ENCODE measurements at regions of chr16 and their contacts with region 1.

Region 1: GRCh38 chr16:79509211-79509631 is 91.3 kb downstream of the MAF start:
- H3K4me3 Mint-ChIP-seq: no peak overlapping the region
- H3K27ac Mint-ChIP-seq: peak overlapping the region; percentile 89
- H3K4me1 Mint-ChIP-seq: peaks cover 40% of the 10 kb centered on the region
- H3K27me3 Mint-ChIP-seq: peaks cover 19% of the 10 kb centered on the region

Region 2: GRCh38 chr16:79451196-79451816 is 57.9 kb before region 1 on chr16:
- intact Hi-C with region 1: loop called (anchors 10 kb)
- H3K4me3 Mint-ChIP-seq: no peak overlapping the region
- H3K27ac Mint-ChIP-seq: peak overlapping the region; percentile 81
- H3K4me1 Mint-ChIP-seq: peaks cover 38% of the 10 kb centered on the region
- H3K27me3 Mint-ChIP-seq: peaks cover 3% of the 10 kb centered on the region

Region 3: GRCh38 chr16:79482011-79482410 is 27.2 kb before region 1 on chr16:
- intact Hi-C with region 1: no loop called
- H3K4me3 Mint-ChIP-seq: no peak overlapping the region
- H3K27ac Mint-ChIP-seq: peak overlapping the region; percentile 20
- H3K4me1 Mint-ChIP-seq: peaks cover 58% of the 10 kb centered on the region
- H3K27me3 Mint-ChIP-seq: peaks cover 11% of the 10 kb centered on the region

Region 4: DNA sequence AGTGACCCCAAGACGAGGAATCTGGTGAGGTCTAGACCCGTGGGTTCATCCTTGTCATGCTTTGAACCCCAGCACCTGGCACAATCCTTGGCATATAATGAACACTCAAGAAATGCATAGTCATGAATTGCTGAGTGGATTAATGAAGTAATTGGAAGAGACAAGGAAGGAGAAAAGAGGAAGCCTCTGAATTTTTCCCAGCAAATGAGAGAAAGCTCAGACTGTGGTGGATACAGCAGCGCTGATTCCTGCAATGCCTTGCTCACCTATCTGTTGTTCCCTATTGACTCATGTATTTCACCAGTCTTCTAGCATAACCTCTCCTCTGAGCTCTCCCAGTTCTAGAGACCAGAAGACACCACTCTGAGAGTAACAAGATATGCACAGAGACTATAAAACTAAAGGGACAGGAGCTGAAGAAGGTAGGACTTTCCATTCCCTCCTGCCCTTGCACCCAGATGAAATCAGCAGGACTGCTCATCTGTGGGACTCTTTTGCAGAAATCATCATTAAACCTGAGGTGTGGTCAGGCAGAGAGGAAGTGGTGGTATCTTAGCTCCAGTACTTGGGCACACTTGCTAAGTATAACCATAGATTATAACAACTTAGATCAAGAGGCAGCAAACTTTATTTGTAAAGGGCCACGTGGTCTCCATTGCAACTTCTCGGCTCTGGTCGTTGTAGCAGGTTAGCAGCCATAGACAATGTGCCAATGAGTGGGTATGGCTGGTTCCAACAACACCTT is 11.4 kb before region 1 on chr16:
- intact Hi-C with region 1: no loop called
- H3K4me3 Mint-ChIP-seq: no peak overlapping the region
- H3K27ac Mint-ChIP-seq: peak overlapping the region; percentile 66
- H3K4me1 Mint-ChIP-seq: peaks cover 46% of the 10 kb centered on the region
- H3K27me3 Mint-ChIP-seq: peaks cover 20% of the 10 kb centered on the region

Region 5: DNA sequence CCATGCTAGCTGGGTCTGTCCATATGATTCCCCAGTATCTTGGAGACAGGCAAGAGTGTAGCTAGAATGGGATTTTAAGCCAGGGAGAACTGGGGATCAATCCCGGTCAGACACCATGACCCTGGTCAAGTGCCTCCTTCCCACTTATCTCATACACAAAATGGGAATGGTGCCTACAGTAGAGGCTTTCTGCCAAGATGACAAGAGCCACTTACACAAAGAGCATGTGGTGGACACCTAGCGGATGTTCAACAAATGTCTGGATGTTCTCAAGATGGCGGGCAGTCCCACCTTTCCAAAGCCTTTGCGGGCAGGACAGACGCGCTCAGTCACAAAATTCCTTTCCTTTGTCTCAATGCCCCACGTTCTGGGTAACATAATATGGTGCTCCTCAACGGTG is 34.0 kb after region 1 on chr16:
- intact Hi-C with region 1: no loop called
- H3K4me3 Mint-ChIP-seq: no peak overlapping the region
- H3K27ac Mint-ChIP-seq: peak overlapping the region; percentile 85
- H3K4me1 Mint-ChIP-seq: peaks cover 27% of the 10 kb centered on the region
- H3K27me3 Mint-ChIP-seq: peaks cover 33% of the 10 kb centered on the region

Measured in dendritic cell treated with granulocyte-macrophage colony-stimulating factor and Interleukin-4, amounts not matched to agents 40 ng/mL and 50 ng/mL, for 4 days (primary cell).